ENCODE measurements at regions of chr22 and their contacts with region 1.

Region 1: GRCh38 chr22:43090130-43090789 is 1.1 kb upstream of the TTLL1 start:
- DNase-seq: no peak
- ATAC-seq: peak; percentile 68
- H3K4me3 ChIP-seq: no peak overlapping the region
- H3K27ac ChIP-seq: no peak overlapping the region
- H3K4me1 ChIP-seq: peaks cover 10% of the 10 kb centered on the region
- H3K27me3 ChIP-seq: no peaks in the 10 kb centered on the region
- CTCF ChIP-seq: peak; percentile 33

Region 2: GRCh38 chr22:42984814-42985552 is 105.3 kb before region 1 on chr22:
- intact Hi-C with region 1: loop called (anchors 10 kb)
- DNase-seq: no peak
- ATAC-seq: peak; percentile 23
- H3K4me3 ChIP-seq: no peak overlapping the region
- H3K27ac ChIP-seq: no peak overlapping the region
- H3K4me1 ChIP-seq: no peaks in the 10 kb centered on the region
- H3K27me3 ChIP-seq: no peaks in the 10 kb centered on the region
- CTCF ChIP-seq: no peak